Ascending aorta (tissue), 2 donors: ENCODE measurements at regions of chr12 and their contacts with region 1.

Region 1: GRCh38 chr12:80053048-80053790 is 46.1 kb upstream of the OTOGL start:
- DNase-seq: peak; percentile 58 to 92
- H3K4me3 ChIP-seq: peak overlapping the region; percentile 19 to 24
- H3K27ac ChIP-seq: peak overlapping the region; percentile 73 to 80
- H3K4me1 ChIP-seq: peaks cover 0 to 18% of the 10 kb centered on the region in 2 donors
- H3K27me3 ChIP-seq: no peaks in the 10 kb centered on the region
- CTCF ChIP-seq: no peak

Region 2: DNA sequence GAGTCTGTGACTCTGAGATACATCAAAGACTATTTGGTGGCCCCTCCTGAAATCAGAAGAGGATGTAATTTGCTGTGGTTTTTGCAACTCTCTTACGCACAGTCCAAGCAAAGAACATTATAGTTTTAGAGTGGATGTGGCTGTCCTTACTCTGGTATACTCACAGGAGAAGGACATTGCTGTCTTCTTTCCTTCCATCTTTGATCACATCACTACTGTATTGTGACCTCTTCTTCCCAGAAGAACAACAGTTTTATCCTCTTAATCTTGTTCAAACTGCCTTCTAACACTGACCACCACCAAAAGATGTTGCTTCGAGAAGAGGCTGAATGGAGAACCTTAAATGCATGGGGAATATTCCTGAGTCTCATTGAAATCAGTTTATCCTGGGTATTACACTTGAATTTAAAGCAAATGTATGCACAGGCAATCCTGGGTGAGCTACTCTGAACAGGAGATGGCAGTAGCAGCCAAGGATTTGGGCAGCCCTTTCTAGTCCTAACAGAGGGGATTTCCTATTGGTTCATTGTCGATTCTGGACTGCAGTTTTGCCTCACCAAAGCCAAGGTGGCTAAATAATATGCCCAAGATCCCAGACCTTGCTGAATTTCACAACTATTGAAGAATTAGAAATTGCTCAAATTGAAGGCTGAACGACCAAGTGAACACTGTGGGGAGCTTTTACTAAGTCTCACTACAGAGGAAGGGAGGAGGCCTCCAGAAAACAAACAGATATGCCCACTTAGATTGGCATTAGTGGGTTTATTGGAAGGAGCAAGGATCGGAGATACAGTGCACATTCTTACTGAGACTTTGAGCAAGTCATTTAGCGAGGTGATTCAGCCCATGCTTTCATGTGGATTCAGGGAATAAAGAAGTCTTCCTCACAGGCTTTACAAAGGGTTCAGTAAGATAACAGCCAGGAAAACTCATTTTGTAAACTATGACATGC is 645.3 kb before region 1 on chr12:
- intact Hi-C with region 1: loop called (anchors 10 kb)
- DNase-seq: peak in 1 of 2 donors; percentile 77
- H3K4me3 ChIP-seq: no peak overlapping the region
- H3K27ac ChIP-seq: peak overlapping the region; percentile 63 to 65
- H3K4me1 ChIP-seq: peaks cover 3 to 17% of the 10 kb centered on the region in 2 donors
- H3K27me3 ChIP-seq: no peaks in the 10 kb centered on the region
- CTCF ChIP-seq: peak; percentile 55 to 76 (median 57)

Region 3: GRCh38 chr12:79690638-79691493 is 362.4 kb before region 1 on chr12 and contains the start of gene PAWR:
- intact Hi-C with region 1: loop called (anchors 5 kb)
- DNase-seq: peak in 1 of 2 donors; percentile 81
- H3K4me3 ChIP-seq: peak within 1 kb of the TSS; percentile 96 to 99
- H3K27ac ChIP-seq: peak within 1 kb of the TSS; percentile 93 to 99
- H3K4me1 ChIP-seq: peaks cover 0 to 7% of the 10 kb centered on the region in 2 donors
- H3K27me3 ChIP-seq: no peaks in the 10 kb centered on the region
- CTCF ChIP-seq: peak; percentile 2 to 44 (median 3)
- total RNA-seq, gene PAWR: 75.4 TPM

Region 4: GRCh38 chr12:79935021-79935623 is 118.1 kb before region 1 on chr12 and contains the start of gene PPP1R12A:
- intact Hi-C with region 1: loop called (anchors 1 kb)
- DNase-seq: peak; percentile 83 to 98
- H3K4me3 ChIP-seq: peak within 1 kb of the TSS; percentile 75 to 93
- H3K27ac ChIP-seq: peak within 1 kb of the TSS; percentile 93 to 99
- H3K4me1 ChIP-seq: peaks cover 0 to 2% of the 10 kb centered on the region in 2 donors
- H3K27me3 ChIP-seq: no peaks in the 10 kb centered on the region
- CTCF ChIP-seq: peak in 1 of 3 experiments; percentile 8
- total RNA-seq, gene PPP1R12A: 374 TPM

Region 5: DNA sequence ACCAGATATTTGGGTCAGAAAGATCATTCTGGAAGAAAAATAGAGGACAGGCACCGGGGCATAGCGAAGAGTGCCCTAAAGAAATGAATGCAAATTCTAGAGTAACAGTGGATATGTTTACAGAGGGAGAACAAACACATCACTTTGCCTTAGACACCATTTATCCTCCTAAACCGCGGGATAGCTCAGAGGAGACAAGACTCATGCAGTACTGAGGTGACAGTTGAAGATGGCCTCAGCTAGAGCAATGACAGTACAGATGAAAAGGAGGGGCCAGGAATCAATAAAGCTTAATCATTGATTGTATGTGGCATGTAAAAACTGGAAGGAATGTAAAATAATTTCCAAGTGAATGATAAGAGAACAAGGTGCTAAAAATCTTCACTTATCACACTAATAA is 107.8 kb before region 1 on chr12:
- intact Hi-C with region 1: no loop called
- DNase-seq: no peak
- H3K4me3 ChIP-seq: no peak overlapping the region
- H3K27ac ChIP-seq: no peak overlapping the region
- H3K4me1 ChIP-seq: no peaks in the 10 kb centered on the region
- H3K27me3 ChIP-seq: no peaks in the 10 kb centered on the region
- CTCF ChIP-seq: no peak

Region 6: GRCh38 chr12:80033448-80033847 is 19.8 kb before region 1 on chr12:
- intact Hi-C with region 1: loop called (anchors 2 kb)
- DNase-seq: peak in 1 of 2 donors; percentile 72
- H3K4me3 ChIP-seq: peak overlapping the region in 1 of 2 donors; percentile 24
- H3K27ac ChIP-seq: peak overlapping the region; percentile 59 to 61
- H3K4me1 ChIP-seq: peaks cover 0 to 19% of the 10 kb centered on the region in 2 donors
- H3K27me3 ChIP-seq: no peaks in the 10 kb centered on the region
- CTCF ChIP-seq: no peak